IMR-90 (cell line): ENCODE measurements at regions of chr4 and their contacts with region 1.

Region 1: DNA sequence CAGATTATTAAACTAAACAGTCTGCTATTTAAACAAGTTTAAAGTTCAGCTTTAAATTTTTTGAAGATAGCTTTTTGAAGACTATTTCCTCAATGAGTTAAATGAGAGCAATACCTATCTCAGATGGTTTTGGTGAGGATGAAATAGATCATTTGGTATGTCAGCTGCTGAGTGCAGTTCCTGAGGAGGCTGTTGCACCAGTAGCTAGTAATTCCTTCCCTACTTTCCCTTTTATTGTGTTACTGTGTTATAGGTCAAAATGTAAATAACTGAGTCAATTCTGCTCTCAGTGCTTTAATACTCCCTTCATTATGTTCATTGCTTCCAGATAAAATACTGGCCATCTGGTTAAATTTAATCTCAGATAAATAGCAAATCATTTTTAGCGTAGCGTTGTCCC is 48.6 kb downstream of the BMPR1B start:
- DNase-seq: peak; percentile 30
- ATAC-seq: peak; percentile 75
- H3K4me3 ChIP-seq: no peak overlapping the region
- H3K27ac ChIP-seq: no peak overlapping the region
- H3K4me1 ChIP-seq: no peaks in the 10 kb centered on the region
- H3K27me3 ChIP-seq: no peaks in the 10 kb centered on the region
- CTCF ChIP-seq: no peak
- POLR2A ChIP-seq: no peak
- RAD21 ChIP-seq: no peak

Region 2: DNA sequence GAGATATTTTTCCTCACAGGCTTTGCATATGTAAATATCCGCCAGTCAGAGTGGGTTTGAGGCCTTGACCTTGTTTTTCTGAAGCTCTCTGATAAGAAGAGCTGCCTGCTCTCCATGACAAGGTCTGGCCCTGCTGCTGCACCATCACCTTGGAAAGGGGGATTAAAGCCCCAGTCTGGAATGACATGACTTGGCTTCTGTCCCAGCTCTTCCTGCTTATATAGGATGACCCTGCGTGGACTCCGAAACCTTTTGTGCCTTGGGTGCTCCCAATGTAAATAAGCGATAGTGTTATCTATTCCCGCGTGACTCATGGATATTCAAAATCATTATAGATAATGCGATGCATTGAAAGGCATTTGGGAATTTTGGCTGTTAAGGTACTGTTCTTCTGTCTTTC is 90.6 kb after region 1 on chr4:
- CTCF ChIA-PET with region 1: no interaction called
- POLR2A ChIA-PET with region 1: no interaction called
- dilution Hi-C with region 1: no loop called
- in situ Hi-C with region 1: no loop called
- intact Hi-C with region 1: loop called (anchors 5 kb)
- DNase-seq: no peak
- ATAC-seq: no peak
- H3K4me3 ChIP-seq: no peak overlapping the region
- H3K27ac ChIP-seq: no peak overlapping the region
- H3K4me1 ChIP-seq: no peaks in the 10 kb centered on the region
- H3K27me3 ChIP-seq: no peaks in the 10 kb centered on the region
- CTCF ChIP-seq: no peak
- POLR2A ChIP-seq: no peak
- RAD21 ChIP-seq: no peak

Region 3: GRCh38 chr4:95439896-95440295 is 633.5 kb after region 1 on chr4:
- CTCF ChIA-PET with region 1: no interaction called
- POLR2A ChIA-PET with region 1: no interaction called
- dilution Hi-C with region 1: no loop called
- in situ Hi-C with region 1: no loop called
- intact Hi-C with region 1: no loop called
- DNase-seq: no peak
- ATAC-seq: no peak
- H3K4me3 ChIP-seq: no peak overlapping the region
- H3K27ac ChIP-seq: no peak overlapping the region
- H3K4me1 ChIP-seq: no peaks in the 10 kb centered on the region
- H3K27me3 ChIP-seq: no peaks in the 10 kb centered on the region
- CTCF ChIP-seq: no peak
- POLR2A ChIP-seq: no peak
- RAD21 ChIP-seq: no peak